ENCODE measurements at regions of chr2 and their contacts with region 1.

Region 1: GRCh38 chr2:63861220-63861822 is 19.6 kb downstream of the UGP2 start:
- DNase-seq: peak; percentile 39 to 68 (median 47)
- ATAC-seq: peak; percentile 80
- H3K4me3 ChIP-seq: no peak overlapping the region
- H3K27ac ChIP-seq: no peak overlapping the region
- H3K4me1 ChIP-seq: no peaks in the 10 kb centered on the region
- H3K27me3 ChIP-seq: no peaks in the 10 kb centered on the region
- CTCF ChIP-seq: peak; percentile 56 to 67 (median 61)
- EP300 ChIP-seq: no peak
- POLR2A ChIP-seq: no peak
- RAD21 ChIP-seq: peak; percentile 61 to 83

Region 2: GRCh38 chr2:63692002-63692606 is 169.2 kb before region 1 on chr2:
- CTCF ChIA-PET with region 1: interaction called, 25 read pairs
- POLR2A ChIA-PET with region 1: no interaction called
- in situ Hi-C with region 1: loop called (anchors 5 kb)
- intact Hi-C with region 1: loop called (anchors 2 kb)
- DNase-seq: peak in 2 of 4 experiments; percentile 24 to 32
- ATAC-seq: peak; percentile 53; the same call in 1 of the 3 replicates
- H3K4me3 ChIP-seq: no peak overlapping the region
- H3K27ac ChIP-seq: no peak overlapping the region
- H3K4me1 ChIP-seq: no peaks in the 10 kb centered on the region
- H3K27me3 ChIP-seq: peaks cover 0 to 5% of the 10 kb centered on the region in 2 experiments; a peak in 2 of 5 replicates
- CTCF ChIP-seq: peak in 2 of 3 experiments; percentile 42 to 65; a peak in 3 of 6 replicates
- EP300 ChIP-seq: no peak
- POLR2A ChIP-seq: no peak
- RAD21 ChIP-seq: peak; percentile 69 to 81

Region 3: DNA sequence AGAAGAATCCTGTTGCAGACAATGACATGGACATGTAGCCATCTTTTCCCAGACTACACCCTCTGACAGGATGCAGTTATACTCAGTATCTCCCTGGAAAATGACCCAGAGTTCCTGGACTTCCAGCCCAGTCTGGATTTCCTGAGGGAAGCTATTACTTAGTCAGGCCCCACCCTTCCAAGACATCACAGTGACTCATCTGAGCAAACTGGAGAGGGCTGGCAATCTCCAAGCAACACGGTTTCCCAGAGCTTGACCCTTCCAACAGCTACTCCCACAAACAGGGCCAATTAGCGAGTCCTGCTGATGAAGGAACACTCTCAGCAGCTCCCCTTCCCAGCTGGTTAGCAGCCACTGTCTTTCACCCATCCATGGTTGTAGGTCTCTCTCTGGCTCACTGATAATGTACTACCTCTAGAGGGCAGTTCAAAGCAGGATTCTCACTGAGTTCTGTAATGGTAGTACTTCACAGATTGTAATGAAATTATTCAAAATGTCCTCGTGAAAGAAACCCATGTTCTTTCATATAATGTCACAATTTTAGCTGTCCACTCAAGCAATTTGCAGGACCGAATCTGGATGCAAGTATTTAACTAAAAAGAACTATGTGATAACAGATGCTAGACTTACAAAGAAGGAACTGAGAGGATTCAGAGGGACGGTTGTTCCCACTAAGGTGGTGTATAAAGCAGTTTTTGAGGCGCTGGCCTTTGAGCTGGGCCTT is 162.3 kb before region 1 on chr2:
- CTCF ChIA-PET with region 1: interaction called, 6 read pairs
- POLR2A ChIA-PET with region 1: no interaction called
- in situ Hi-C with region 1: loop called (anchors 5 kb)
- intact Hi-C with region 1: no loop called
- DNase-seq: peak in 2 of 4 experiments; percentile 30 to 47
- ATAC-seq: peak; percentile 97
- H3K4me3 ChIP-seq: no peak overlapping the region
- H3K27ac ChIP-seq: no peak overlapping the region
- H3K4me1 ChIP-seq: no peaks in the 10 kb centered on the region
- H3K27me3 ChIP-seq: no peaks in the 10 kb centered on the region
- CTCF ChIP-seq: peak; percentile 40 to 66 (median 50); a peak in 4 of 6 replicates
- EP300 ChIP-seq: no peak
- POLR2A ChIP-seq: no peak
- RAD21 ChIP-seq: peak; percentile 69 to 86